Ovary (tissue), 10 donors: ENCODE measurements at regions of chr15 and their contacts with region 1.

Region 1: DNA sequence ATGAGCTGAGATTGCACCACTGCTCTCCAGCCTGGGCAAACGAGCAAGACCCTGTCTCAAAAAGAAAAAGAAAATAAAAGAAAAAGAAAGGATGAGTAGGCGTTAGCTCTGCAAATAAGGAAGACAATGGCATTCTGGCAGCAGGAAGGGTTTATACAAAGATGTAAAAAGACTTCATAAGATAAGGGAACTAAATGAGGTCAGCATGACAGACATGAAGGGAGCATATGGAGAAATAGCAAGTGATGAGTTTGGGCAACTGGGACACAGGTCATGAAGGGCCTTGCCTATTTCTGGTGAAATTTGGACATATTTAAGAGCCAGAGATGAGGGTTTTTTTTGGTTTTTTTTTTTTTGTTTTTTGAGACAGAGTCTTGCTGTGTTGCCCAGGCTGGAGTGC is 24.5 kb downstream of the TMEM266 start:
- DNase-seq: no peak
- H3K4me3 ChIP-seq: no peak overlapping the region
- H3K27ac ChIP-seq: no peak overlapping the region
- H3K4me1 ChIP-seq: no peaks in the 10 kb centered on the region
- H3K27me3 ChIP-seq: no peaks in the 10 kb centered on the region
- CTCF ChIP-seq: no peak
- EP300 ChIP-seq: no peak
- POLR2A ChIP-seq: no peak

Region 2: GRCh38 chr15:76024021-76024768 is 60.1 kb before region 1 on chr15:
- intact Hi-C with region 1: loop called in 1 of 4 experiments (anchors 10 kb)
- DNase-seq: no peak
- H3K4me3 ChIP-seq: no peak overlapping the region
- H3K27ac ChIP-seq: no peak overlapping the region
- H3K4me1 ChIP-seq: no peaks in the 10 kb centered on the region
- H3K27me3 ChIP-seq: no peaks in the 10 kb centered on the region
- CTCF ChIP-seq: no peak
- EP300 ChIP-seq: no peak
- POLR2A ChIP-seq: no peak

Region 3: DNA sequence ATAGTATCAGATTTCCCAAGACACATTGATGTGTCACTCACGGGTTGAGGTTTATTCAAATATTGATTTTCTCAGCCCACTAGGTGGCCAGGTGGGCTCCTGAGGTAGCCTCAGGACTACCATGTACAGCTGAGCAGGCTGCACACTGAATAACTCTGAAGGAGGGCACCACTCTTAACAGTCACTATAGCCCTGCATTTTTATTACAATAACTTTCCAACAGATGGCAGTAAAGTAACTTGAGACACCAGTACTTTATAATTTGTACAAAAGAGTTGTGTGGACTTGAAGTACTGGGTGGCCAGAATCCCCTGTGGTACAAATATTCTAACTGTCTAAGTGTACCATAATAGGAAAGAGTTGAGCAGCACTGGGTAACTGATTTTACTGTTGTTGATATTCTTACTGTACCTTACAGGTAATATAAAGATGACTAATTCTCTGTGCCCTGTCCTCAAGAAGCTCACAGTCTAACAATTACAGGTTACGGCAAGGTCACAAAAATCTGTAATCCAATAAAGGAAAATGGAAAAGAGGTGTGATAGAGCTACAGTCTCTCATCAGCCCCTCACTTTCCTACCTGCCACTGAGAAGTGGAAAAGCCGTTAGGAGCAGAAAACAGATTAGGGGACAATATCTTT is 151.1 kb after region 1 on chr15:
- intact Hi-C with region 1: loop called in 1 of 4 experiments (anchors 5 kb)
- DNase-seq: no peak
- H3K4me3 ChIP-seq: no peak overlapping the region
- H3K27ac ChIP-seq: no peak overlapping the region
- H3K4me1 ChIP-seq: no peaks in the 10 kb centered on the region
- H3K27me3 ChIP-seq: no peaks in the 10 kb centered on the region
- CTCF ChIP-seq: peak in 1 of 3 donors; percentile 17
- EP300 ChIP-seq: no peak
- POLR2A ChIP-seq: no peak